MCF 10A (cell line): ENCODE measurements at regions of chr20 and their contacts with region 1.

Region 1: GRCh38 chr20:5168651-5169396 is 42.0 kb downstream of the CDS2 start:
- DNase-seq: peak; percentile 46
- H3K4me3 Mint-ChIP-seq: no peak overlapping the region
- H3K27ac Mint-ChIP-seq: no peak overlapping the region
- H3K4me1 Mint-ChIP-seq: peaks cover 15% of the 10 kb centered on the region
- H3K27me3 Mint-ChIP-seq: no peaks in the 10 kb centered on the region
- CTCF ChIP-seq: no peak

Region 2: DNA sequence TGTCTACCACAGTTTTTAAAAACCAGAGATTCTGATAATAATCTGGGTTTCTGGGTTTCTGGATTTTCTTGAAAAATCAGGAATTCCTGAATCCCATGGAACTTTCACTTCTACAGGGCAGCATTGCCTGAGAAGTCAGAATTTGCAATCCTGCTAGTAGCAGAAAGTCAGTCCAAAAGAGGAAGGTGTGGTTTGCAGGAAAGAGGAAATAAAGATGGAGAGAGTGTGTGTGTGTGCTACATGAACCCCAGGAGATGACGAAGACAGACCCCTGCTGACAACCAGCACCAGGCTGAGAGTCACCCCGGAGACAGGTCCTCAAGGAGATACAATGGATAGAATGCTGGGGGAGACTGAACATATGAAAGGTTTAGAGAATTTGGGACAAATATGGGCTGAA is 402.2 kb before region 1 on chr20:
- CTCF ChIA-PET with region 1: no interaction called
- POLR2A ChIA-PET with region 1: no interaction called
- intact Hi-C with region 1: no loop called
- DNase-seq: no peak
- H3K4me3 Mint-ChIP-seq: no peak overlapping the region
- H3K27ac Mint-ChIP-seq: no peak overlapping the region
- H3K4me1 Mint-ChIP-seq: peaks cover 9% of the 10 kb centered on the region
- H3K27me3 Mint-ChIP-seq: no peaks in the 10 kb centered on the region
- CTCF ChIP-seq: no peak

Region 3: DNA sequence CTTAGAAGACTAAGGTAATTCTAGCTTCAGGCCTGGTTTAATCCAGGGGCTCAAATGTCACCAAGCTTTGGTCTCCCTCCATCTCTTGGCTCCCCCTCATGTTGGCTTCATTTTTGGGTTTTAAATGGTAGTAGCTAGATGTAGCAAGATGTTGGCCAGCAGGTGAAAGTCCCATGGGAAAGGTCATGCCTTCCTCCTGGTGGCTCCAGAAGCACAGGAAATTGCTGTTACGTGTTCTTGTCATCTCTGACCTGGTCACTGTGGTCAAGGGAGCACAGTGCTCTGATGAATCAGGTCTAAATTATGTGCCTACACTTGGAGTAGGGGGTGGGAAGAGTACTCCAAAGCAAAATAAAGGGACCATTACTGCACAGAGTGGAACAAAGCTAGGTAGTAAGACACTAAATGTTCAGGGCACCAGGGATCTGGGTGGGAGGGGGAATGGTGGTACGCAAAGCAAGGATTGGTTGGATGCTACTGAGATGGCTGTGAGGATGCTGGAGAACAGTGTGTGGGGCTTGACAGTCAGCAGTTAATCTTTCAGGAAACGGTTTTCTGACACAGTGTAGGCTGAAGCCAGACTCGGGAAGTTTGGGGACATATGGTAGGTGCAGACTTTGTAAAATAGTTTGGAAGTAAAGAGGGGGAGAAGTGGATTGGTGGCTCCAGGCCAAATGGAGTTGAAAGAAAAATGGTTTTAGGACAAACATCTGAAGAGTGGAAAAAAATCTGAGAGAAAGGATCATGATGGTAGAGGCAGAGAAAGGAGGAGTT is 12.0 kb before region 1 on chr20:
- CTCF ChIA-PET with region 1: interaction called, 17 read pairs
- POLR2A ChIA-PET with region 1: interaction called, 7 read pairs
- intact Hi-C with region 1: no loop called
- DNase-seq: peak; percentile 22
- H3K4me3 Mint-ChIP-seq: no peak overlapping the region
- H3K27ac Mint-ChIP-seq: peak overlapping the region; percentile 57
- H3K4me1 Mint-ChIP-seq: peaks cover 29% of the 10 kb centered on the region
- H3K27me3 Mint-ChIP-seq: no peaks in the 10 kb centered on the region
- CTCF ChIP-seq: no peak